Heart left ventricle (tissue), 16 donors: ENCODE measurements at regions of chr7 and their contacts with region 1.

Region 1: GRCh38 chr7:16071246-16071857 is 350.0 kb downstream of the CRPPA start:
- DNase-seq: peak in 1 of 5 donors; percentile 27
- ATAC-seq: peak in 3 of 4 donors; percentile 54 to 67 (median 55)
- H3K4me3 ChIP-seq: peak overlapping the region in 7 of 12 donors; percentile 9 to 31 (median 13)
- H3K27ac ChIP-seq: peak overlapping the region in 5 of 12 donors; percentile 7 to 85 (median 80)
- H3K4me1 ChIP-seq: peaks cover 0 to 26% (median 15%) of the 10 kb centered on the region in 12 donors
- H3K27me3 ChIP-seq: no peaks in the 10 kb centered on the region
- CTCF ChIP-seq: peak; percentile 72 to 93 (median 85)
- POLR2A ChIP-seq: no peak

Region 2: DNA sequence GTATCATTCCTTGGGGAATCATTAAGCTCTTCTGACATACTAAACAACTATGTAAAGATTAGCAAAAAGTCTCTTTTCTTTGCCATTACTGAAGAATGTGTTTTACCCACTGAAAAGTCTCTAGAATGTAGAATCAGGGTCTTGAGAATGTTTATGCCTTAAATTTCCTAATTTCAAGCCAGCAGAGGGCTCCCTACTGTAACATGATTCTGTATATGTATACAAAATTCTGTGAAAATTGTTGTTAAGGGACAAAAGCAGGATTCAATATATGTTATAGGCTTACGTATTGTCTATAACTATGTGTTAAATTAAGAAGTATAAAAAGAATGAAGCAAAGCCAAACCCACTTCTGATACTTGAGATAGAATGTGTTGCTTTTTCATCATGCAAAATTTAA is 871.9 kb before region 1 on chr7:
- intact Hi-C with region 1: loop called in 2 of 10 experiments (anchors 10 kb)
- DNase-seq: no peak
- ATAC-seq: no peak
- H3K4me3 ChIP-seq: no peak overlapping the region
- H3K27ac ChIP-seq: no peak overlapping the region
- H3K4me1 ChIP-seq: peaks cover 0 to 5% (median 0%) of the 10 kb centered on the region in 12 donors
- H3K27me3 ChIP-seq: no peaks in the 10 kb centered on the region
- CTCF ChIP-seq: peak in 6 of 12 donors; percentile 17 to 49 (median 36)
- POLR2A ChIP-seq: no peak

Region 3: GRCh38 chr7:15305002-15305600 is 766.3 kb before region 1 on chr7:
- intact Hi-C with region 1: loop called in 6 of 10 experiments (anchors 5 kb)
- DNase-seq: peak in 4 of 5 donors; percentile 35 to 46 (median 42)
- ATAC-seq: peak in 1 of 4 donors; percentile 38
- H3K4me3 ChIP-seq: no peak overlapping the region
- H3K27ac ChIP-seq: no peak overlapping the region
- H3K4me1 ChIP-seq: no peaks in the 10 kb centered on the region
- H3K27me3 ChIP-seq: no peaks in the 10 kb centered on the region
- CTCF ChIP-seq: peak; percentile 54 to 84 (median 76)
- POLR2A ChIP-seq: no peak

Region 4: DNA sequence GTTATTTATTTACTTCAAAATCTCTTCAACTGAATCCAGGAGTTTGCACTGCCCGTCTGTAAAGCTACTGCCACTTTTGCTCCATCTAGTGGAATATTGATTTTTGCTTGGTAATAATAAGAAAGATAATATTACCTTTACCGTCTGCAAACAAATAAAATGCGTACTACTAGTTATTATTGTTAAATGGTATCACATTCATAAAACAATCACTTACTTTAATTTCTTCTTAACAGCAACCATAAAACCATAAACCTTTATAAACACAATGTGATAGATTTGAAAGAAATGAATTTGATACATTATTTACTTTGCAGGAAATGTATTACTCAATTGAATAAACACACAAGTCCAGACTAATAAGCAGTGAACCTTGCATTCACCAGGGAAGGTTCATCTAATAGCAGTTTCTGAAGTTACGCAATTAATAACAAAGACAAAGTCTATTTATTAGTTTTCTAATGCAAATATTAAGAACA is 515.9 kb before region 1 on chr7:
- intact Hi-C with region 1: loop called in 8 of 10 experiments (anchors 5 to 10 kb)
- DNase-seq: no peak
- ATAC-seq: peak in 1 of 4 donors; percentile 30
- H3K4me3 ChIP-seq: peak overlapping the region in 1 of 12 donors; percentile 14
- H3K27ac ChIP-seq: no peak overlapping the region
- H3K4me1 ChIP-seq: peaks cover 0 to 32% (median 1%) of the 10 kb centered on the region in 12 donors
- H3K27me3 ChIP-seq: no peaks in the 10 kb centered on the region
- CTCF ChIP-seq: peak in 8 of 12 donors; percentile 27 to 57 (median 46)
- POLR2A ChIP-seq: no peak

Region 5: GRCh38 chr7:15686295-15686956 is 384.9 kb before region 1 on chr7 and contains the start of gene MEOX2:
- intact Hi-C with region 1: loop called in 8 of 10 experiments (anchors 2 to 10 kb)
- DNase-seq: peak; percentile 90 to 91 (median 90)
- ATAC-seq: peak; percentile 86 to 95 (median 92)
- H3K4me3 ChIP-seq: peak within 1 kb of the TSS; percentile 45 to 80 (median 72)
- H3K27ac ChIP-seq: peak within 1 kb of the TSS; percentile 85 to 95 (median 90)
- H3K4me1 ChIP-seq: peaks cover 0 to 15% (median 0%) of the 10 kb centered on the region in 12 donors
- H3K27me3 ChIP-seq: peaks cover 0 to 25% (median 0%) of the 10 kb centered on the region in 9 donors
- CTCF ChIP-seq: peak in 1 of 12 donors; percentile 5
- POLR2A ChIP-seq: peak in 1 of 2 donors; percentile 88
- total RNA-seq, gene MEOX2: 5.0 to 17.1 (median 11.0) TPM

Region 6: DNA sequence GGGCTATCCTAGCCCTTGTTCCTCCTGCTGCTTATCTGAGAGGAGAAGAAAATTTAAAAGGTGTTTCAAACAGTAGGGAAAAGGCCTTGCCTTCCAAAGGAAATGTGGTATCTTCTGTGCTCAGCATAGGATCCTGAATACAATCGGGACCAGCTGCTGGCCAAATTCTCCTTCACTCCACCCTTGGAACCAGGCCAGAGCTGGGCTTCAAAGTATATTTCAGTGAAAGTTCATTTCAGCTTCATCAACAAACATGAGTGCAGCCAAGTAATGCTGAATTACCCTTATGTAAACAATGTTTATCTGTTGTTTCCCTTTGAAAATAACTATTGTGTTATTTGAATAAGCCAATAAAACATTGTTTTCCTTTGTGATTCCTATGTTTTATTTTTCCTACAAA is 238.3 kb before region 1 on chr7:
- intact Hi-C with region 1: loop called in 5 of 10 experiments (anchors 5 to 10 kb)
- DNase-seq: peak; percentile 66 to 79 (median 72)
- ATAC-seq: peak; percentile 23 to 69 (median 44)
- H3K4me3 ChIP-seq: no peak overlapping the region
- H3K27ac ChIP-seq: peak overlapping the region in 9 of 12 donors; percentile 5 to 53 (median 26)
- H3K4me1 ChIP-seq: peaks cover 0 to 48% (median 22%) of the 10 kb centered on the region in 12 donors
- H3K27me3 ChIP-seq: no peaks in the 10 kb centered on the region
- CTCF ChIP-seq: no peak
- POLR2A ChIP-seq: no peak

Region 7: DNA sequence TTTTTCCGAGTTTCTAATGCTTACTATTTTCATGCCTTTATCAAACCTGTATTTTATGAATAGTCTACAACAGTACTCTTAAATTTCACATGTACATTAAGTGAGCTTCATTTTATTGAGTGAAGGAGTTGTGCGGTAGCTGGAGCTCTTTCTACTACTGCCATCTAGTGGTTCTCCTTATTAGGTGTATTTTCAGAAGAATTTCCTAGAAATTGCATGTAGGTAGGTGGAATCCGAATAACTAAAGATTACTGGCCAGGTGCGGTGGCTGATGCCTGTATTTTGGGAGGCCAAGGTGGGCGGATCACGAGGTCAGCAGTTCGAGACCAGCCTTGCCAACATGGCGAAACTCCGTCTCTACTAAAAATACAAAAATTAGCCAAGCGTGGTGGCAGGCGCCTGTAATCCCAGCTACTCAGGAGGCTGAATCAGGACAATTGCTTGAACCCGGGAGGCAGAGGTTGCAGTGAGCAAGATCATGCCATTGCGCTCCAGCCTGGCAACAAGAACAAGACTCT is 493.6 kb after region 1 on chr7:
- intact Hi-C with region 1: loop called in 1 of 10 experiments (anchors 2 kb)
- DNase-seq: no peak
- ATAC-seq: peak in 2 of 4 donors; percentile 50 to 59
- H3K4me3 ChIP-seq: no peak overlapping the region
- H3K27ac ChIP-seq: no peak overlapping the region
- H3K4me1 ChIP-seq: peaks cover 0 to 5% (median 0%) of the 10 kb centered on the region in 12 donors
- H3K27me3 ChIP-seq: no peaks in the 10 kb centered on the region
- CTCF ChIP-seq: peak; percentile 63 to 90 (median 78)
- POLR2A ChIP-seq: no peak